ENCODE measurements at regions of chr14 and their contacts with region 1.

Region 1: GRCh38 chr14:20873370-20874177 is 17.6 kb upstream of the RNASE3 start:
- DNase-seq: peak; percentile 14 to 84 (median 78)
- H3K4me3 ChIP-seq: peak overlapping the region in 17 of 59 donors; percentile 2 to 34 (median 26)
- H3K27ac ChIP-seq: no peak overlapping the region
- H3K27me3 ChIP-seq: peaks cover 0 to 22% (median 0%) of the 10 kb centered on the region in 45 donors
- CTCF ChIP-seq: peak; percentile 45 to 90 (median 77)

Region 2: DNA sequence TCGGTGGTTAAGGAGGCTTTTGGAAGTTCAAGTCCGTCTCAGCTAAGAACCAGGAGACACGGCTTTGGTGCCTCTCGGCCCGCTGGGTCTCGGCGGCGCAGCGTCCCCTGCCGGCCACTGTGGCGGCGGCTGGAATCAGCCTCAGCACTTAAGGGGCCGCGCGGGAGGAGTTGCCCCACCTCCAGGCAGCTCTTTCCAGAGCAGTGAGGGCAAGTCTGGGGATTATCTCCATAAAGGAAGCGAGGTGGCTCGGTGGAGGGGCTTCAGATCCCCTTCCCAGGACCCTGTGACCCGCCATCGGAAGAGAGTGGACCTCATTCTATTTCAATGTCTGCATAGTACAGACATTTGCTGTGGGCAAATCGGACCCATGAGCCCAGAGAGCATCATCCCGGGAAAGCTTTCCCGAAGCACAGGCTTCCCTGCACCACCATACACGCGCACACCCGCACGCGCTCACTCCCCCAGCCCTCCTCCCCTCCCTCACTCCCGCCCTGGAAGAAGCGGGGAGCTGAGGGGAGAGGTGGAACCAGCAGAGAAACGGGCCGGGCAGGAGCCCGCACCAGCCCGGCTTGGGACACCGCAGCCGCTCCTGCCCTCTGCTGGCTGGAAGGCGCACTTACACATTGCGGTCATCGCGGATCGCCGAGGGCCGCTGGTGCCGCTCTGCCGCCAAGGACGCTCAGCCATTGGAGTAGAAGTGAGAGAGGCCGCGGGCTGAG is 97.6 kb after region 1 on chr14:
- intact Hi-C with region 1: loop called in 1 of 2 experiments (anchors 5 kb)
- DNase-seq: peak; percentile 66 to 89 (median 76)
- H3K4me3 ChIP-seq: peak overlapping the region; percentile 54 to 97 (median 70)
- H3K27ac ChIP-seq: peak overlapping the region in 55 of 59 donors; percentile 10 to 88 (median 68)
- H3K27me3 ChIP-seq: peaks cover 0 to 20% (median 0%) of the 10 kb centered on the region in 45 donors
- CTCF ChIP-seq: peak; percentile 52 to 88 (median 78)

Measured in dorsolateral prefrontal cortex (tissue), 120 donors.